Mammary epithelial cell (primary cell): ENCODE measurements at regions of chr2 and their contacts with region 1.

Region 1: DNA sequence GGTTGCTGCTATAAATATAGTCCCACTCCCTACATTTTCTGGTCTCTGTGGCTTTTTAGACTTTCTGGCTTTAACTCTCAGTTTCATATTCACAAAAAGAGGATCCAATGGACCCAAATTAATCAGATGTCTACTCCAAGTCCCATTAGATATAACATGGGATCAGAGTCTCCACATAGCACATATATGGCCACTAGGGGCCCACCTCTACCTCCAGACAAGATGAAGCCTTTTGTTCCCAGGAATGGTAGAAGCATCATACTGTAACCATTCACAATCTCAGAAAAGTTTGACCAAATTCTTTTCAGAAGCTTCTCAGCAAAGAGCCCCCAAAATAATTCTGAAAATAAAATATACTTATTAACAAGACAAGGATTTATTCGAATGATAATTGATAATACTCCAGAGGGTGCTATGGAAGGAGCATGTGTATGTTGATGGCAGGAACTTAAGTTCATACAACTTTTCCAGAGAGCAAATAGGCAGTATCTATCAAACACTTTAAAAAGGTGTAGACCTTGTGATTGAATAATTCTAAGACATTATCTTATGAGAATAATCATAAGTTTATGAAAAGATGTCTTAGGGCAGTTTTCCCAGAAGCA is 382.3 kb upstream of the CRIM1 start:
- DNase-seq: peak; percentile 25
- H3K4me3 ChIP-seq: no peak overlapping the region
- H3K27ac ChIP-seq: no peak overlapping the region
- H3K4me1 ChIP-seq: no peaks in the 10 kb centered on the region
- H3K27me3 ChIP-seq: no peaks in the 10 kb centered on the region
- CTCF ChIP-seq: peak; percentile 55 to 69

Region 2: DNA sequence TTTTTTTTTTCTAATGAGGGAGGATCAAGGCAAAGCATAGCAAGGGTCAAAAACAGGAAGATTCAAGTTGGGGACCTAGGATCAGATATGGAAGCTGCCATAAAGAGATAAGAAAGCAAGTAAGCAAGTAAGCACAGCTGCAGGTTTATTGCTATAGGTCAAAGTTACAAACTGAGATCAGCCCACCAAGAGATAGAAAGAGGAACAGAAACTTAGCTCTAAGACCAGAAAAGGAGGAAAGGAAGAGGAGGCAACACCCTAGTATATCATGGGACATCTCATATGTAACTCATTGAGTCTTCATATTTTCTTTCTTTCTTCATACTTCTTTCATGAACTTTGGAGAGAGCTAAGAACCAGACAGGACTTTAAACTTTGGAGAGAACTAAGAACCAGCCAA is 86.5 kb after region 1 on chr2:
- CTCF ChIA-PET with region 1: no interaction called
- dilution Hi-C with region 1: no loop called
- in situ Hi-C with region 1: no loop called
- intact Hi-C with region 1: no loop called
- DNase-seq: no peak
- H3K4me3 ChIP-seq: no peak overlapping the region
- H3K27ac ChIP-seq: no peak overlapping the region
- H3K4me1 ChIP-seq: no peaks in the 10 kb centered on the region
- H3K27me3 ChIP-seq: no peaks in the 10 kb centered on the region
- CTCF ChIP-seq: no peak

Region 3: GRCh38 chr2:36322108-36322507 is 348.9 kb after region 1 on chr2:
- CTCF ChIA-PET with region 1: no interaction called
- dilution Hi-C with region 1: no loop called
- in situ Hi-C with region 1: no loop called
- intact Hi-C with region 1: loop called (anchors 1 kb)
- DNase-seq: peak; percentile 42
- H3K4me3 ChIP-seq: no peak overlapping the region
- H3K27ac ChIP-seq: no peak overlapping the region
- H3K4me1 ChIP-seq: no peaks in the 10 kb centered on the region
- H3K27me3 ChIP-seq: no peaks in the 10 kb centered on the region
- CTCF ChIP-seq: peak; percentile 53 to 77

Region 4: DNA sequence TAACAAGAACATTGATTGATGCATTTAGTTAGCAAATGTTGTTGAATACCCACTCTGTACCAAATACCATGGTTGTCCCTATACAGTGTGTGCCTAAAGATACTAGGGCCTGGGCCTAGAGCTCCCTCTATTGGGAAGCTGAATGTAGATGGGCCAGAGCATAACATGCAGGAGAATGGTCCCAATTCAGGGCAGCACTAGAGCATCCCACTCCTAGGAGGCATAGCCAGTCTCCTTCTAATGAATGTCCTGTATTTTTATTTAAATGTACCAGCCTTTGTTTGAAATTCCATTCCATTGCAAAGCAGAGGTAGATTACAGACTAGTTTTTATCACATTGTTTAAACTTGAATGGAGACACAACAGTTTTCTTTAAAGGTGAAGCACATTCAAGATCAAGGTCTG is 534.2 kb after region 1 on chr2:
- CTCF ChIA-PET with region 1: no interaction called
- dilution Hi-C with region 1: no loop called
- in situ Hi-C with region 1: no loop called
- intact Hi-C with region 1: loop called (anchors 10 kb)
- DNase-seq: peak; percentile 35
- H3K4me3 ChIP-seq: no peak overlapping the region
- H3K27ac ChIP-seq: no peak overlapping the region
- H3K4me1 ChIP-seq: no peaks in the 10 kb centered on the region
- H3K27me3 ChIP-seq: no peaks in the 10 kb centered on the region
- CTCF ChIP-seq: peak; percentile 86 to 89

Region 5: GRCh38 chr2:36672199-36672598 is 699.0 kb after region 1 on chr2:
- CTCF ChIA-PET with region 1: no interaction called
- dilution Hi-C with region 1: no loop called
- in situ Hi-C with region 1: no loop called
- intact Hi-C with region 1: loop called (anchors 10 kb)
- DNase-seq: peak; percentile 20
- H3K4me3 ChIP-seq: no peak overlapping the region
- H3K27ac ChIP-seq: no peak overlapping the region
- H3K4me1 ChIP-seq: no peaks in the 10 kb centered on the region
- H3K27me3 ChIP-seq: no peaks in the 10 kb centered on the region
- CTCF ChIP-seq: peak; percentile 56 to 57